MCF 10A (cell line): ENCODE measurements at regions of chr19 and their contacts with region 1.

Region 1: DNA sequence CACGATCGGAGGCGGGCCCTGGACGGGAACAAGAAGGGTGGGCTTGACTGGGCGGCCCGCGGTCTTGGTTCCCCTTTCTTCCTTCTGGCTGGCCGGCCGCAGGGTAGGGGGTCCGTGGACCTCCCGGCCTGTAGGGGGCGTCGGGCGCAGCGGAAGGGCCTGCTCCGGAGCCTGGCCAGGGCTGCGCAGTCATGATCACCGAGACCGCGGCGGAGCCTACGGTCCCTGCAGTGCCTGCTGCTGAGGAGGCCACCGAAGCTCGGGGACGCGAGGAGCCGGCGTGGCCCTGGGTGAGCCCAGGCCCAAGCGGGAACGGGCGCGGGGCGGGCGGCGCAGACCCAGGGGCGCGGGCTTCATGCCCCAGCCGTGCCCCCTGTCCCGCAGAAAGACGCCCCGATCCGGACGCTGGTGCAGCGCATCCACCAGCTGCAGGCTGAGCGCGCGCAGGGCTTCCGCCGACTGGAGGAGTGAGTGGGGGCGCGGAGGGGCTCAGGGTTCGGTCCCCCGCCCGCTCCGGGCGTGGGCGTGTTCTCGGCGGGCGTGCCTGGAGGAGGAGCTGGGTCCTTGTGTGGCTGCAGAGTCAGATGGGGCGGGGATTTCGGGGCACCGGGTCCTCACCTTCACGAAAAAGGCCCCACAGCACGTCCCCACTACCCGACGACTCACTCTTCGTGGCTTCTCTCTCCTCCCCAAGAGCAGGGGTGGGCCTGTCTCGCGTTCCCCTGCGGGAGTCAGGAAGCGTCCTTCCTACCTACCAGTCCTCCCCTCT is at the start of gene REX1BD:
- DNase-seq: peak; percentile 72
- H3K4me3 Mint-ChIP-seq: peak within 1 kb of the TSS; percentile 88
- H3K27ac Mint-ChIP-seq: peak within 1 kb of the TSS; percentile 90
- H3K4me1 Mint-ChIP-seq: peaks cover 11% of the 10 kb centered on the region
- H3K27me3 Mint-ChIP-seq: no peaks in the 10 kb centered on the region
- CTCF ChIP-seq: peak; percentile 75
- total RNA-seq, gene REX1BD: 29.6 and 49.3 TPM in 2 replicates

Region 2: DNA sequence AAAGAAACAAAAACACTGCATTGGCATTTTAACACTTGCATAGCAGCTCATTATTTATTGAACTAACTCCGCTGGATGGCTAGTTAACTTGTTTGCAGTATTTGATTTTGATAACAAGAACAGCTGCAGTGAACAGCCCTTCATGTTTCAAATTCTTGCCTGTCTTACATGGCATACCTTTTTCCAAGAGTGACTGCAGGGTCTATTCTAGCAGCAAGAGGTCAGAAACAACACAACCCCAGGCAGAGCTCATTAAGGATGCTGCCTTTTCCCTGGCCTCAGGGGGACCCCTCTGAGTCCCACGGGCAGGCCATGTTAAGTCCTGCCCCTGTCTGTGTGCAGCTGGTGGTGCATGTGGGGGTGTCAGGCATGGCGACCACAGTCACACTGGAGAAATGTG is 231.8 kb before region 1 on chr19:
- CTCF ChIA-PET with region 1: no interaction called
- POLR2A ChIA-PET with region 1: no interaction called
- intact Hi-C with region 1: no loop called
- DNase-seq: no peak
- H3K4me3 Mint-ChIP-seq: no peak overlapping the region
- H3K27ac Mint-ChIP-seq: no peak overlapping the region
- H3K4me1 Mint-ChIP-seq: peaks cover 6% of the 10 kb centered on the region
- H3K27me3 Mint-ChIP-seq: no peaks in the 10 kb centered on the region
- CTCF ChIP-seq: no peak

Region 3: DNA sequence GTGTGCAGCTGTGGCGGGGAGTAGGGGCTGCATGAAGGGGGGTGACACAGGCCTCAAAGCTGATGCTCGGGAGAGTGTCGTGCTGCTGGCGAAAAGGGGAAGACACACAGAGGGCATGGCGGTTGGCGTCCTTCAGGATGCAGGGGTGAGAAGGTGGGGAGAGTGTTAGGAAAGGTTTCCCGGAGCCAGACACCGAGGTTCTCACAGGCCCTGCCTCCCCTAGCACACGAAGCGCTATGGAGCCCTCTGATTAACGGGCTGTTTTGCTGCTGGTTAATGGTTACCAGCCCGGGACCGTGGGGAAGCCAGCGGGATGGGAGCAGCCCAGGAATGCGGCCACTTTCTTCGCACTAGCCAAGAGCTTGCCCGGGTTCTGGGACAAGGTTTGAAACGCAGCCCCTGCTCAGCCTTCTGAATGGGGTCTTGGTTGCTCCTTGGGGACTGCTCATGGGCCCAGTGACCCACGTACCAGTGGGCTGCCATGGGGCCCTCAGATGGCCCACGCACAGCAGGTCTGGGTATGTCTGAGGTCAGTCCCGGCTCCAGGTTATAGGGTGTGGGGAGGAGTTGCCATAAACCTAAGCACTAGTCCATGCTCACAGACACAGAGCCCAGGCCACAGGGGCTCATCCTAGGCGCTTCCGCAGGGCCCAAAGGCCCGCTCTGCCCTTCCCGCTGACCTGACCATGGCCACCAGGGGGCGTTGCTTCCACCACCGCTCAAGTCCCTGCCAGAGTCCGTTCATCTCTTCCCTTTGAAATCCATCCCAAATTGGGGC is 119.5 kb before region 1 on chr19:
- CTCF ChIA-PET with region 1: interaction called, 3 read pairs
- POLR2A ChIA-PET with region 1: no interaction called
- intact Hi-C with region 1: loop called (anchors 5 kb)
- DNase-seq: peak; percentile 57
- H3K4me3 Mint-ChIP-seq: no peak overlapping the region
- H3K27ac Mint-ChIP-seq: no peak overlapping the region
- H3K4me1 Mint-ChIP-seq: peaks cover 26% of the 10 kb centered on the region
- H3K27me3 Mint-ChIP-seq: no peaks in the 10 kb centered on the region
- CTCF ChIP-seq: peak; percentile 84

Region 4: DNA sequence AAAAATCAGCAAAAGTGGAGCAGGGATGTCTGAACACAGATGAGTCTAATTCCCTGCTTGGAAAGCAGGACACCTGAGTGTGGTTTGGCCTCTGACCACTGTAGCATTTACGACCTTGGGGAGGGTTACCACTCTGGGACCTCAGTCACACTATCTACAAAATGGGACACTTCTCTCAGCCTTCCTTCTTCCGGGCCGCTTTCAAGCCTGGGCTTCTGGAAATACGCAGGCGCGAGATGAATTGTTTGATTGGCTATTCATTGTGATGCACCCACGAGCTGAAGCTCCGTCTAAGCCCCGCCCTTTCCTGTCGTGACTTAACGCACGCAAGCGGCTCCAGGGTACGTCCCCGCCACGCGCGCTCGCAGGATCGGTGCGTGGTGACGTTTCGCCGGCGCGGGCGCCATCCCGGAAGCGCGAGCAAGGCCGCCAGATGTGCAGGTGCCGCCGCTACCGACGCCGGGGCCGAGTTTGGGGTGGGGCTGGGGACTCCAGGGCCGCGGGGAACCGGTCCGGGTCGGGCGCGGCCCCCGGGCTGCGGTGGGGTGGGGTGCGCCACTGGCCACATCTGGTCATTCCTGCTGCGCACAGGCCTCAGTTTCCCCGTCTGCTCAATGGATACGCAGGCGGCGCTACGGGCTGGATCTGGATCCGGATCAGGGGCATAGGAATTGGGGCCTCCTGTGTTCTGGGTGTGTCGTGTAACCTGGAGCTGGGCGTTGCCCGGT is 31.2 kb before region 1 on chr19 and contains the start of gene KXD1:
- CTCF ChIA-PET with region 1: interaction called, 3 read pairs
- POLR2A ChIA-PET with region 1: interaction called, 20 read pairs
- intact Hi-C with region 1: no loop called
- DNase-seq: peak; percentile 99
- H3K4me3 Mint-ChIP-seq: peak within 1 kb of the TSS; percentile 74
- H3K27ac Mint-ChIP-seq: peak within 1 kb of the TSS; percentile 86
- H3K4me1 Mint-ChIP-seq: peaks cover 11% of the 10 kb centered on the region
- H3K27me3 Mint-ChIP-seq: no peaks in the 10 kb centered on the region
- CTCF ChIP-seq: no peak
- total RNA-seq, gene KXD1: 120 and 126 TPM in 2 replicates

Region 5: GRCh38 chr19:18675779-18676178 is 87.0 kb after region 1 on chr19:
- CTCF ChIA-PET with region 1: interaction called, 18 read pairs
- POLR2A ChIA-PET with region 1: interaction called, 3 read pairs
- intact Hi-C with region 1: loop called (anchors 5 kb)
- DNase-seq: peak; percentile 44
- H3K4me3 Mint-ChIP-seq: no peak overlapping the region
- H3K27ac Mint-ChIP-seq: no peak overlapping the region
- H3K4me1 Mint-ChIP-seq: peaks cover 12% of the 10 kb centered on the region
- H3K27me3 Mint-ChIP-seq: no peaks in the 10 kb centered on the region
- CTCF ChIP-seq: peak; percentile 35

Region 6: GRCh38 chr19:18846862-18847548 is 258.2 kb after region 1 on chr19:
- CTCF ChIA-PET with region 1: interaction called, 25 read pairs
- POLR2A ChIA-PET with region 1: interaction called, 5 read pairs
- intact Hi-C with region 1: no loop called
- DNase-seq: peak; percentile 72
- H3K4me3 Mint-ChIP-seq: no peak overlapping the region
- H3K27ac Mint-ChIP-seq: peak overlapping the region; percentile 46
- H3K4me1 Mint-ChIP-seq: peaks cover 24% of the 10 kb centered on the region
- H3K27me3 Mint-ChIP-seq: no peaks in the 10 kb centered on the region
- CTCF ChIP-seq: peak; percentile 87